ENCODE measurements at regions of chr1 and their contacts with region 1.

Region 1: DNA sequence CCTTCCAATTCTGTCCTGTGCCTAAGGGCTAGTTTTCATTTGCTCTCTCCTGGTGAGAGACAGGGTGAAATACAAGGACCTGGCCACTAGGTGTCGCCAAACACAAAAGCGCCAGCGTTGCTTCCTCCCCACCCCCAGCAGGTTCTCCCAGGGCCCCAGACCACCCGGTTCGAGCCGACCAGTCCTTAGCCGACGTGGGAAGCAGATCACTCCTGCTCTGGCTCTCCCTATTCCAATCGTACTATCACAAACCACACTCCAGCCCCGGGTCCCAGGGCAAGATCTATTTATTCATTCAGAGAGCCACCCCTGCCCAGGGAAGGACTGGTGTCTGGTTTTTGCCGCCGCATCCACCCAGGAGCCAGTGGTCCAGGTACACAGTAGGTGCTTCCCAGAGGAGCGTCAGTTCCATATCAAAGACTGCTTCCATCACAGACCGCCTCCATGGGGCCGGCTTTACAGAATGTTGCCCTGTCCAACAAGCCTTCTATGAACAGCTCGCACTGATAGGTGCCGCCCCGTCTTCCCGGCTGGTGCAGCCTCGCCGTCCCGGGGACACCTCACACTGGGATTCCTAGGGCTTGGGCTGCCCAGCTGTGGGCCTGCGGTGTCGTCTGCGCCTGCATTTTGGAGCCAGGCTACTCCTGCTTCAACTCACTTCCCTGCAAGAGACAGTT is 35.0 kb downstream of the CTNNBIP1 start:
- DNase-seq: peak; percentile 86
- ATAC-seq: peak; percentile 96
- H3K4me3 Mint-ChIP-seq: no peak overlapping the region
- H3K27ac Mint-ChIP-seq: no peak overlapping the region
- H3K4me1 Mint-ChIP-seq: peaks cover 3% of the 10 kb centered on the region
- H3K27me3 Mint-ChIP-seq: no peaks in the 10 kb centered on the region

Region 2: GRCh38 chr1:9861360-9861759 is 13.7 kb before region 1 on chr1:
- CTCF ChIA-PET with region 1: interaction called, 12 read pairs
- POLR2A ChIA-PET with region 1: no interaction called
- intact Hi-C with region 1: no loop called
- DNase-seq: no peak
- ATAC-seq: no peak
- H3K4me3 Mint-ChIP-seq: no peak overlapping the region
- H3K27ac Mint-ChIP-seq: no peak overlapping the region
- H3K4me1 Mint-ChIP-seq: peaks cover 10% of the 10 kb centered on the region
- H3K27me3 Mint-ChIP-seq: no peaks in the 10 kb centered on the region

Region 3: DNA sequence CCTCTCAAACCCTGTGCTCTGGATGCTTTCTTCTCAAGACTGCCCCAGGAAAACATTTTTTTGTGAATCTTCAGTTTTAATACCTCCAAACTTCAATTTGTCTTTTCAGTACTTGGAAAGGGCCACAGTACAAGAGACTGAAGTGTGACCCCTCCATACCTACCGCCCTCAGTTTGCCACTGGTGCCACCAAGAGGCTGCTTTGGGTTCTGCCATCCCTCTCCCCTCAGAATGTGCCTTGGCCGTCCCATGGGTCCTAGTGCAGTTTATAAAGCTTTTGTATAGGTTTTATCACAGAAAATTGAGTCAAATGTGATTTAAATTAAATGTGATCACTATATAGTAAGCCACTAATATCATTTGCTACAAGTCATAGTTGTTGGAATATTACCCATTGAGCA is 462.9 kb after region 1 on chr1:
- CTCF ChIA-PET with region 1: no interaction called
- POLR2A ChIA-PET with region 1: no interaction called
- intact Hi-C with region 1: loop called in 1 of 2 experiments (anchors 5 kb)
- DNase-seq: peak; percentile 69
- ATAC-seq: peak; percentile 86
- H3K4me3 Mint-ChIP-seq: no peak overlapping the region
- H3K27ac Mint-ChIP-seq: no peak overlapping the region
- H3K4me1 Mint-ChIP-seq: no peaks in the 10 kb centered on the region
- H3K27me3 Mint-ChIP-seq: no peaks in the 10 kb centered on the region

Measured in activated CD4-positive, alpha-beta T cell treated with anti-CD3 and anti-CD28 coated beads for 36 hours (primary cell).